Psoas muscle (tissue), 8 donors: ENCODE measurements at regions of chr5 and their contacts with region 1.

Region 1: DNA sequence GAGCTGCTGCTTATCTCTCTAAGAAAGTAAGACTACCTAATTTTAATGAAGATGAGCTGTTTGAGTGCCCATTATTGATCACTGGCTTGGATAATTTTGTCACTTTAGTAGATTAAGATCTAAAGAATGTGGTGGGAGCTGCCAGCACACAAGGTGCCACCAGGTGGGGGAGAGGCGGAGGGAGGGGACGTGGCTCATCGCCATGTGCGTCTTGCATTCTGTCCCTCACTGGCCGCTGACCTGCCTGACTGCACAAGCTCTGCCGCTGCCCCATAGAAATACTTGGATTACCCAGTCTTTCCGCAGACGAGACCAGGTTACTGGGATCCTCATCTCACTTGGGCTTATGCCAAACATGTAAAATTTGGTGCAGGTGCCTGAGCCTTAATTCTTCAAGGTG is 37.6 kb downstream of the RHOBTB3 start:
- DNase-seq: no peak
- ATAC-seq: no peak
- H3K4me3 ChIP-seq: no peak overlapping the region
- H3K27ac ChIP-seq: no peak overlapping the region
- H3K4me1 ChIP-seq: peaks cover 14% of the 10 kb centered on the region
- H3K27me3 ChIP-seq: no peaks in the 10 kb centered on the region
- CTCF ChIP-seq: no peak

Region 2: DNA sequence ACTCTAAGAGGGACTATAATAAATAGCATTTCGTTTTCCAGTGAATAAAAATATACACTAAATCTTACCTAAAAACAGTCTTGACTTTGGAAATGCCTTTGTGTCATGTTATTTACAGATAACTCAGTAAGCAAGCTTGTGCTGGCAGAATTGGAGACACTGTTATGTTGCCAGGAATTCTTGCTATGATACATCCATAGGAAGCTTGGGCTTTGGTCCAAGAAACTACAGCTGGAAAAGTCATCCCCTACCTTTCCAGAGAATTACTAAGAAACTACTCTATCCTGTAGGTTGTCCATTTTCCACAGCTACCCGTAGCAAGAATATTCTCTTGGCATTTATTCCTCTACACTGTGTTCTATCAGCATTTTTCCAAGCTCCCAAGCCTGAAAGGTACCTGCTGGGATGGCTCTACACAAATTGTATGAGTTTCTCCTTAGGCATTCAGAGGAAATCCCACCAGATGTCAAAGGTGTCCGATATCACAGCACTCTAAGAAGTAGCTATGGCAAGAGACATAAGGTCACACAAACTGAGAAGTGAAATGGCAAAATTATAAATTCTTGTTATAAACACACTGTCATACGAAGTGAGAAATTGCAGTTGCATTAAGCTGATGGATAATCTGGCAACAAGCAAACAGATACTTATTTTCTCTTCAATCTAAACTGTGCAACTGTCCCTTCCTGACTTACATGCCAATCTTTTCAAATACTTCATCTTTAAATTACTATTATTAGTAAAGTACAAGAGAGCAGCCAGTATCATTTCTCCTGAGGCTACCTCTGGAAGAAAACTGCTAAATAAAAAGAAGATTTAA is 552.4 kb before region 1 on chr5:
- intact Hi-C with region 1: no loop called
- DNase-seq: no peak
- ATAC-seq: no peak
- H3K4me3 ChIP-seq: no peak overlapping the region
- H3K27ac ChIP-seq: no peak overlapping the region
- H3K4me1 ChIP-seq: no peaks in the 10 kb centered on the region
- H3K27me3 ChIP-seq: no peaks in the 10 kb centered on the region
- CTCF ChIP-seq: no peak

Region 3: DNA sequence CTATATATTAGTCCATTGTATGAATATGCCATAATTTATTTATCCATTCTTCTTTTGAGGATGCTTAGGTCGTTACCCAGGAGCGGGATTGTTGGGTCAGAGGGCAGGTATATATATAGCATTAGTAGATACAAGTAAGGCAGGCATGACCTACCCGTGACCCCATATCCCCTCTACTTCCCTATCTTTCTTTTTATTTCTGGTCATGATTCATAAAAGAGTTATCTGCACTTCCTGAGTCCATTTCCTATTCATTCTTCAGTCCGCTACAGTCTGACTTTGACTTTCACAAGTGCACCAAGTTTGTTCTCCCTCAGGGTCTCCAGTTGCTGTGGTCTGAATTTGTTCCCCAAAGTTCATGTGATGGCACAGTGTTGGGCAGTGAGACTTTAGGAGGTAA is 30.6 kb before region 1 on chr5:
- intact Hi-C with region 1: loop called in 1 of 2 experiments (anchors 2 kb)
- DNase-seq: no peak
- ATAC-seq: no peak
- H3K4me3 ChIP-seq: no peak overlapping the region
- H3K27ac ChIP-seq: no peak overlapping the region
- H3K4me1 ChIP-seq: peaks cover 42% of the 10 kb centered on the region
- H3K27me3 ChIP-seq: no peaks in the 10 kb centered on the region
- CTCF ChIP-seq: no peak

Region 4: DNA sequence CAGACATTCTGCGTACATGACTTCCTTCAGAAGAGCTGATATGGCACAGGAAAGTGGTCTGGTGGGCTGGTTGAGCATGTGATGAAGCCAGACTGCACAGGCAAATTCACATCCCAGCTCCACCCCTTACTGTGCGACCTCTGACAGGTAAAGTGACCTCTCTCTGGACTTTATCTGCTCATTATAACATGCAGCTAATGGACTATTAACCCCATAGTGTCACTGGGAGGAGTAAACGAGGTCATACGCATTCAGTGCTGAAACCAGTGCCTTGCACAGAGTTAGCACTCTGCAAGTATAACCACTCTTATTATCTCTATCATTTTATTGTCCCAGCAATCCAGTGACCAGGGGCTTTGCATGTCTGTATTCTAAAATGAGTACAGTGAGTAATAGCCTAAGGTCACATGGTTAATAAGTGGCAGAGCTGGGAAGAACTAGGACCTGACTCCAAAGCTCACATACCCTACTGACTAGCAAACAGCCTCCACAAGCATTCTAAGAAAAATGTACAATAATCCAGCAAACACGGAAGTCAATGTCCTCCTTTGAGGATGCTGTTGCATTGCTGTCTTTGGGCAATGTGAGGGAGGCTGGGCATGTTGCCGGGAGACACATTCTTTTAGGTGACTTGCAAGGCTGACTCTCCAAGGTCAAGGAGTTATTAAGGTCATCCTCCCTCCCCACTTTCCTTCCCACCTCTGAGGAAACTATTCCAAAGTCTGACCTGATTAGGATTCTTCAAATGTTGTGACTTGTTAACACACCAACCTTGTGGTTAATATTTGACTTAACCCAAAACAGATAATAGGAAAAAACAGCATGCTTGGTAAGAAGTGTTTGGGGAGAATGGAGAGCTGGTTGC is 34.8 kb after region 1 on chr5:
- intact Hi-C with region 1: no loop called
- DNase-seq: no peak
- ATAC-seq: peak; percentile 73 to 88 (median 86)
- H3K4me3 ChIP-seq: no peak overlapping the region
- H3K27ac ChIP-seq: peak overlapping the region; percentile 50
- H3K4me1 ChIP-seq: peaks cover 28% of the 10 kb centered on the region
- H3K27me3 ChIP-seq: no peaks in the 10 kb centered on the region
- CTCF ChIP-seq: no peak